ENCODE measurements at regions of chr19 and their contacts with region 1.

Region 1: GRCh38 chr19:15354566-15355296 is 22.4 kb upstream of the BRD4 start:
- DNase-seq: no peak
- ATAC-seq: 0 out of 2 replicates have a peak, but pooled peaks have one; percentile 35
- H3K4me3 ChIP-seq: no peak overlapping the region
- H3K27ac ChIP-seq: no peak overlapping the region
- H3K4me1 ChIP-seq: no peaks in the 10 kb centered on the region
- H3K27me3 ChIP-seq: no peaks in the 10 kb centered on the region
- CTCF ChIP-seq: no peak

Region 2: DNA sequence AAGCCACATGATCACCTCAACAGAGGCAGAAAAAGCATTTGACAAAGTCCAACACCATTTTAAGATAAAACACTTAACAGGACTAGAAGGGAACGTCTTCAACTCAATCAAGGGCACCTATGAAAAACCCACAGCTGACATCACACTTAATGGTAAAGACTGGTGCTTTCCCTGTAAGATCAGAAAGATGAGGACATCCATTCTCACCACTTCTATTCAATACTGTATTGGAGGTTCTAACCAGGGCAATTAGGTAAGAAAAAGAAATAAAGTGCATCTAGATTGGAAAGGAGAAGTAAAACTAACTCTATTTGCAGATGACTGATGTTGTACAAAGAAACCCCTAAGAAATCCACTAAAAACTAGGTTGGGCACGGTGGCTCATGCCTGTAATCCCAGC is 36.1 kb after region 1 on chr19:
- CTCF ChIA-PET with region 1: no interaction called
- POLR2A ChIA-PET with region 1: no interaction called
- in situ Hi-C with region 1: no loop called
- intact Hi-C with region 1: no loop called
- DNase-seq: no peak
- ATAC-seq: no peak
- H3K4me3 ChIP-seq: no peak overlapping the region
- H3K27ac ChIP-seq: no peak overlapping the region
- H3K4me1 ChIP-seq: no peaks in the 10 kb centered on the region
- H3K27me3 ChIP-seq: no peaks in the 10 kb centered on the region
- CTCF ChIP-seq: no peak

Region 3: DNA sequence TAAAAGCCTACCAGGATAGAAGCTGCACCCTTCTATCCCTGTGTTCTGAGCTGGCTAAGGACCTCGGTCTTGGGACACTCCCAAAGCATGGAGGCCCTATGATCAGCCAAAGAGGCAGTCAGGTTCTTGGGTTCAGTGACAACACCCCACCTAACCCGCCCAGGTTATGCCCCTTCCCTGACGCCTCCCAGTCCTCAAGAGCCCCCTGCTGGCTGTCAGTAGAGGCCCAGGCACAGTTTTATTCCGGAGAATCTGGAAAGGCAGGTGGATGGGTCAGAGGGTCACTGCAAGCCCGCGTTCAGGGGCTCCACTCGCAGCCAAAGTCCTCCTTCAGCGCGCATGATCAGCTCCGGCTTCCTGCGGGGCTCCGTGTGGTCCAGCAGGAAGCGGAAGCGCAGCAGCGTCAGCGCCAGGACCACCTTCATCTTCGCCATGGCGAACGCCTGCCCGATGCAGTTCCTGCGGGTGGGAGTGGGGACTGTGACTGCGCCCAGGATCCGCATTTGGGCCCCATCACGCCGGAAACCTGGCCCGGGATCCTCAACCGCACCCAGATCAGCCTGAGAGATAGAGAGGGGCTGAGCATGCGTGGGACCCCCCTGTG is 405.3 kb after region 1 on chr19:
- CTCF ChIA-PET with region 1: no interaction called
- POLR2A ChIA-PET with region 1: interaction called, 11 read pairs
- in situ Hi-C with region 1: no loop called
- intact Hi-C with region 1: no loop called
- DNase-seq: no peak
- ATAC-seq: no peak
- H3K4me3 ChIP-seq: no peak overlapping the region
- H3K27ac ChIP-seq: no peak overlapping the region
- H3K4me1 ChIP-seq: no peaks in the 10 kb centered on the region
- H3K27me3 ChIP-seq: 0 out of 2 replicates have a peak, but pooled peaks cover 2% of the 10 kb centered on the region
- CTCF ChIP-seq: peak; percentile 42

Measured in Panc1 (cell line).